Endothelial cell of umbilical vein (primary cell): ENCODE measurements at regions of chr17 and their contacts with region 1.

Region 1: GRCh38 chr17:34386697-34387550 is 23.9 kb upstream of the CCL1 start:
- DNase-seq: peak; percentile 53
- H3K4me3 ChIP-seq: no peak overlapping the region
- H3K27ac ChIP-seq: peak overlapping the region; percentile 72
- H3K4me1 ChIP-seq: peaks cover 46% of the 10 kb centered on the region
- H3K27me3 ChIP-seq: peaks cover 0 to 4% of the 10 kb centered on the region in 2 experiments
- CTCF ChIP-seq: no peak
- POLR2A ChIP-seq: no peak

Region 2: DNA sequence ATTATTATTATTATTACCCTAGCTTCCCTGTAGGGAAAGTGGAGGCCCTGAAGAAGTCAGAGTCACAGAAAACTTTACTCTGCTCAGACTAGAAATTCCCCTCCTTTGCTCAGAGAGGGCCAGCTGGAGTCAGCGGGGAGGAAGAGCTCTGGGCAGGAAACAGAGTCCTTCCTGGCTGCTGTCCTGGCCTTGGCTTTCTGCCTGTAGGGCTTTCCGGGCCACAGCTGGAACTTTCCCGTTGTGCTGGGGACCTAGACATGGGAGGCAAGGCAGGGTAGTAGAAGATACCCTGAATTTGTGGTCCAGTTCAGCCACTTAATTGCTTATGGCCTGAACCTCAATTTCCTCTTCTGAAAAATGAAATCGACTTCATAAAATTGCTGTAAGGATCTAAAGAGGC is 145.9 kb before region 1 on chr17:
- CTCF ChIA-PET with region 1: no interaction called
- POLR2A ChIA-PET with region 1: no interaction called
- dilution Hi-C with region 1: no loop called
- intact Hi-C with region 1: loop called (anchors 2 kb)
- DNase-seq: peak; percentile 79
- H3K4me3 ChIP-seq: no peak overlapping the region
- H3K27ac ChIP-seq: peak overlapping the region; percentile 97
- H3K4me1 ChIP-seq: peaks cover 74% of the 10 kb centered on the region
- H3K27me3 ChIP-seq: no peaks in the 10 kb centered on the region
- CTCF ChIP-seq: no peak
- POLR2A ChIP-seq: no peak

Region 3: DNA sequence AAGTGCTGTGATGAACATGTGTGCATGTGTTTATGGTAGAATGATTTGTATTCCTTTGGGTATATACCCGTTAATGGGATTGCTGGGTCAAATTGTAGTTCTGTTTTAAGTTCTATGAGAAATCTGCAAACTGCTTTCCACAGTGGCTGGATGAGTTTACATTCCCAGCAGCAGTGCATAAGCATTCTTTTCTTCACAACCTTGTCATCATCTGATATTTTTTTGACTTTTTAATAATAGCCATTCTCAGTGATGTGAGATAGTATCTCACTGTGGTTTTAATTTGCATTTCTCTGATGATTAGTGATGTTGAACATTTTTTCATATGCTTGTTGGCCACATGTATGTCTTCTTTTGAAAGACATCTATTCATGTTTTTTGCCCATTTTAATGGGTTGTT is 49.2 kb before region 1 on chr17:
- CTCF ChIA-PET with region 1: no interaction called
- POLR2A ChIA-PET with region 1: no interaction called
- dilution Hi-C with region 1: no loop called
- intact Hi-C with region 1: no loop called
- DNase-seq: no peak
- H3K4me3 ChIP-seq: no peak overlapping the region
- H3K27ac ChIP-seq: no peak overlapping the region
- H3K4me1 ChIP-seq: no peaks in the 10 kb centered on the region
- H3K27me3 ChIP-seq: peaks cover 0 to 7% of the 10 kb centered on the region in 2 experiments
- CTCF ChIP-seq: no peak
- POLR2A ChIP-seq: no peak

Region 4: DNA sequence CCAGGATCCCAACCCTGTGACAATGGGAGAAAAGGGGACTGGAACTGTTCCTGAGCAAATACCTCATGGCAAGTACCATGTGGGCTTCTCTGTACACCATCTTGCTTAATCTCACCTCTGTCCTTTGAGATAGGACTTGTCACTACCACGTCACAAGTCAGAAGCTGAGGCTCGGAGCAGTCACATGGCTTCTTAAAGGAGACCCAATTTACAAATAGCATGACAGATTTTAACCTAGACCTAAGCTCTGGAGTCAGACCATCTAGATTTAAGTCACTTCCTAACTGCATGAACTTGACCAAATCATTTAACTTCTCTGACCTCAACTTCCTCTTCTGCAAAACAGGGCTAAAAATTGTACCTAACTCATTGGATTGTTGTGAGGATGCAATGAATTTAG is 12.1 kb after region 1 on chr17:
- CTCF ChIA-PET with region 1: interaction called, 17 read pairs
- POLR2A ChIA-PET with region 1: no interaction called
- dilution Hi-C with region 1: no loop called
- intact Hi-C with region 1: no loop called
- DNase-seq: no peak
- H3K4me3 ChIP-seq: no peak overlapping the region
- H3K27ac ChIP-seq: no peak overlapping the region
- H3K4me1 ChIP-seq: no peaks in the 10 kb centered on the region
- H3K27me3 ChIP-seq: peaks cover 5 to 13% of the 10 kb centered on the region in 2 experiments
- CTCF ChIP-seq: no peak
- POLR2A ChIP-seq: no peak

Region 5: GRCh38 chr17:34413443-34414119 is 26.7 kb after region 1 on chr17:
- CTCF ChIA-PET with region 1: interaction called, 28 read pairs
- POLR2A ChIA-PET with region 1: no interaction called
- dilution Hi-C with region 1: no loop called
- intact Hi-C with region 1: loop called (anchors 2 kb)
- DNase-seq: no peak
- H3K4me3 ChIP-seq: no peak overlapping the region
- H3K27ac ChIP-seq: peak overlapping the region; percentile 73
- H3K4me1 ChIP-seq: peaks cover 14% of the 10 kb centered on the region
- H3K27me3 ChIP-seq: peaks cover 0 to 6% of the 10 kb centered on the region in 2 experiments
- CTCF ChIP-seq: no peak
- POLR2A ChIP-seq: no peak

Region 6: GRCh38 chr17:35630530-35631148 is 1243.7 kb after region 1 on chr17:
- CTCF ChIA-PET with region 1: no interaction called
- POLR2A ChIA-PET with region 1: no interaction called
- dilution Hi-C with region 1: no loop called
- intact Hi-C with region 1: loop called (anchors 5 kb)
- DNase-seq: peak; percentile 79
- H3K4me3 ChIP-seq: no peak overlapping the region
- H3K27ac ChIP-seq: peak overlapping the region; percentile 41
- H3K4me1 ChIP-seq: peaks cover 17% of the 10 kb centered on the region
- H3K27me3 ChIP-seq: no peaks in the 10 kb centered on the region
- CTCF ChIP-seq: no peak
- POLR2A ChIP-seq: peak; percentile 36